Left ventricle myocardium superior (tissue), 1 donor: ENCODE measurements at regions of chr18 and their contacts with region 1.

Region 1: DNA sequence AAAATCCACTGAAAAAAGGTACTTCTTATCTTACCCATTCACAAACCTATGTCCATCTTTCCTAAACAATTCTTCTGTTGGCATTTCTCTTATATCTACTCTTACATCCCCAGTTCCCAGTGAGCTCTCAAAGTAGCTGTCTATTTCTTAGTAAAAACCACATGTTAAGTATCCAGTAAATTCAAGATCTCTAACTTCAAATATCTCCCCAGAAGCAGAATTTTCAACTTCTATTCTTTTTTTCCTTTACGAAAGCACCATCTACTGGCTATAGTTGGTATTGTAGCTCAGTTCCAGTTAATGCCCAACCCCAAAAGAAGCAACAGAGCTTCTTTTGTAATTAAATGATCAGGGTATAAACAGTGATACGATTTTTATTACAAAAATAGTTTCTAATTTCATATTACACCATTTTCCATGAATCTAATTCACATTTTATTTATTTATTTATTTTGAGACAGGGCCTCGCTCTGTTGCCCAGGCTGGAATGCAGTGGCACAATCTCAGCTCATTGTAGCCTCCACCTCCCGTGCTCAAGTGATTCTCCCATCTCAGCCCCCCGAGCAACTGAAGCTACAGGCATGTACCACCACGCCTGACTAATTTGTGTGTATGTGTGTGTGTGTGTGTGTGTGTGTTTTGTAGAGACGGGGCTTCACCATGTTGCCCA is 28.5 kb downstream of the HRH4 start:
- DNase-seq: no peak
- ATAC-seq: peak; percentile 56

Region 2: DNA sequence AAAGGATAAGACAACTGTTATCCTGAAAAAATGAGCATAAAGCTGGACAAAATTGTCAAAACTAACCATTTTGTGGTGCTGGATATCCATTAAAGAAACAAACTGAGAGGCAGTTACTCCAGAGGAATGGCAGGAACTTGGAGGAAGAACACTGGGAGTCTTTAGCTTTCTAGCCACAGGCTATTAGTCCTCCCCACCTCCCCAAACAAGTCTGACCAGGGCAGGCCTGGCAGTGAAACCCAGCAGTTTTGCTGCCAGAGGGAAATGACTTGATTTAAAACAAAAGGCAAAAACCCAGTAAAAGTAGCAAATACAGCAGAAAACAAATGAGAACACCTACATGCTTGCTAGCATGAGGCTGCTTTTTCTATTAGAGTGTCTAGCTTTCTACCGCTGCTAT is 126.2 kb before region 1 on chr18:
- intact Hi-C with region 1: loop called (anchors 5 kb)
- DNase-seq: no peak
- ATAC-seq: no peak

Region 3: GRCh38 chr18:24432618-24433017 is 56.3 kb before region 1 on chr18:
- intact Hi-C with region 1: loop called (anchors 10 kb)
- DNase-seq: no peak
- ATAC-seq: no peak

Region 4: GRCh38 chr18:24726727-24727492 is 238.0 kb after region 1 on chr18:
- intact Hi-C with region 1: loop called (anchors 10 kb)
- DNase-seq: peak; percentile 41
- ATAC-seq: peak; percentile 77